Activated CD4-positive, alpha-beta memory T cell treated with anti-CD3 and anti-CD28 coated beads for 36 hours (primary cell): ENCODE measurements at regions of chr3 and their contacts with region 1.

Region 1: GRCh38 chr3:128787256-128788240 is 61.6 kb downstream of the RAB7A start:
- DNase-seq: peak; percentile 60
- H3K4me3 Mint-ChIP-seq: peak overlapping the region; percentile 67
- H3K27ac Mint-ChIP-seq: peak overlapping the region; percentile 98
- H3K4me1 Mint-ChIP-seq: peaks cover 93% of the 10 kb centered on the region
- H3K27me3 Mint-ChIP-seq: no peaks in the 10 kb centered on the region

Region 2: GRCh38 chr3:128725932-128726690 is 61.4 kb before region 1 on chr3 and contains the start of gene RAB7A:
- CTCF ChIA-PET with region 1: interaction called, 8 read pairs
- POLR2A ChIA-PET with region 1: interaction called, 14 read pairs
- intact Hi-C with region 1: loop called (anchors 1 kb)
- DNase-seq: peak; percentile 99
- H3K4me3 Mint-ChIP-seq: peak within 1 kb of the TSS; percentile 93
- H3K27ac Mint-ChIP-seq: peak within 1 kb of the TSS; percentile 87
- H3K4me1 Mint-ChIP-seq: peaks cover 50% of the 10 kb centered on the region
- H3K27me3 Mint-ChIP-seq: no peaks in the 10 kb centered on the region
- total RNA-seq, gene RAB7A: 264 to 272 TPM

Region 3: GRCh38 chr3:128845778-128846485 is 58.4 kb after region 1 on chr3:
- CTCF ChIA-PET with region 1: interaction called, 6 read pairs
- POLR2A ChIA-PET with region 1: interaction called, 4 read pairs
- intact Hi-C with region 1: loop called (anchors 2 kb)
- DNase-seq: peak; percentile 92
- H3K4me3 Mint-ChIP-seq: peak overlapping the region; percentile 45
- H3K27ac Mint-ChIP-seq: peak overlapping the region; percentile 84
- H3K4me1 Mint-ChIP-seq: peaks cover 18% of the 10 kb centered on the region
- H3K27me3 Mint-ChIP-seq: no peaks in the 10 kb centered on the region